HCT116 (cell line): ENCODE measurements at regions of chr12 and their contacts with region 1.

Region 1: GRCh38 chr12:96985480-96986362 is 78.7 kb downstream of the NEDD1 start:
- DNase-seq: peak; percentile 6
- ATAC-seq: peak; percentile 96
- H3K4me3 ChIP-seq: no peak overlapping the region
- H3K27ac ChIP-seq: no peak overlapping the region
- H3K4me1 ChIP-seq: peaks cover 0 to 3% of the 10 kb centered on the region in 2 experiments; a peak in 1 of 4 replicates
- H3K27me3 ChIP-seq: peaks cover 24% of the 10 kb centered on the region; the same call in 1 of the 2 replicates
- CTCF ChIP-seq: peak; percentile 66 to 90 (median 84)
- POLR2A ChIP-seq: no peak
- RAD21 ChIP-seq: peak; percentile 64

Region 2: DNA sequence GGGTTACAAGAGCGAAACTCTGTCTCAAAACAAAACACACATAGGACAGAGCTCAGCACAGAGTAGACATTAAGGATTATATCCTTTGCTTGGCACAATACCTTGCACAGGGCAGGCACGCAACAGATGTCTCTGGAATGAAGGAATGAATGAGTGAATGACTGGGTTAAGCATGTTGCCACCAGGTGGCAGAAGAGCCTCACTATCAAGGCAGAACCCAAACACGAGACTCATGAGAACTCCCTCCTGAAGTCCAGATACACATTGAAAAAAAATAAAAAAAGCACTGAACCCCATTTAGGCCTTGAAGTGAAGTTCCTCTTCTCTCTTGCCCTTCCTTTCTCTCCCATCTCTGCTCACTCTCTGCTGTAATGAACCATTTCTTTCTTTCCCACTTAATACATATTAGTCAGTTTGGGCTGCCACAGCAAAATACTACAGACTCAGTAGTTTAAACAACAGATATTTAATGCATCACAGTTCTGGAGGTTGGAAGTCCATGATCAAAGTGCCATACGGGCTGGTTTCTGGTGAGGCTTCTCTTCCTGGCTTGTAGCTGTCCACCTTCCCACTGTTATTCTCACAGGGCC is 923.8 kb before region 1 on chr12:
- CTCF ChIA-PET with region 1: no interaction called
- POLR2A ChIA-PET with region 1: no interaction called
- RAD21 ChIA-PET with region 1: no interaction called
- intact Hi-C with region 1: loop called (anchors 5 kb)
- DNase-seq: peak; percentile 81
- ATAC-seq: peak; percentile 96
- H3K4me3 ChIP-seq: no peak overlapping the region
- H3K27ac ChIP-seq: no peak overlapping the region
- H3K4me1 ChIP-seq: no peaks in the 10 kb centered on the region
- H3K27me3 ChIP-seq: no peaks in the 10 kb centered on the region
- CTCF ChIP-seq: peak; percentile 76 to 87 (median 84)
- POLR2A ChIP-seq: no peak
- RAD21 ChIP-seq: peak; percentile 98

Region 3: DNA sequence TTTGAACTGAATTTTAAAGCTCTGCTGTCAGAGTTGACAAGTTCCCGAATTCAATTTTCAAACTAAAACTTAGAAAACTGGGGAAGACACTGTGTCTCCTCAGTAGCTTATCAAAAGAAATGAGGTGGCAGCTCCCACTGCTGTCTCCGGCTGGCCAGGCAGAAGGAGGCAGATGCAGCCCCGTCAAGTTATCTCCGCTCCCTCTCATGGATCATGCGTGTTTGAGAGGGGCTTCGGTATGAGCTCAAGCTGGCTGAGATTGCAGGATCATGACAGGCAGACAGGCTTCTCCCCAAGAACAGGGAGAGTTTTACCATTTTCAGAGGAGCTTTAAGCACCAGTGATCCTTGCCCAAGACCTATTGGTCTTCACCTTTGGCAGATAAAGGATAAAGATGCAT is 10.1 kb after region 1 on chr12:
- CTCF ChIA-PET with region 1: interaction called, 11 read pairs
- POLR2A ChIA-PET with region 1: no interaction called
- RAD21 ChIA-PET with region 1: no interaction called
- intact Hi-C with region 1: no loop called
- DNase-seq: no peak
- ATAC-seq: no peak
- H3K4me3 ChIP-seq: no peak overlapping the region
- H3K27ac ChIP-seq: no peak overlapping the region
- H3K4me1 ChIP-seq: no peaks in the 10 kb centered on the region
- H3K27me3 ChIP-seq: peaks cover 93% of the 10 kb centered on the region
- CTCF ChIP-seq: no peak
- POLR2A ChIP-seq: no peak
- RAD21 ChIP-seq: no peak

Region 4: GRCh38 chr12:97006585-97006984 is 20.9 kb after region 1 on chr12:
- CTCF ChIA-PET with region 1: no interaction called
- POLR2A ChIA-PET with region 1: no interaction called
- RAD21 ChIA-PET with region 1: no interaction called
- intact Hi-C with region 1: no loop called
- DNase-seq: no peak
- ATAC-seq: no peak
- H3K4me3 ChIP-seq: no peak overlapping the region
- H3K27ac ChIP-seq: no peak overlapping the region
- H3K4me1 ChIP-seq: no peaks in the 10 kb centered on the region
- H3K27me3 ChIP-seq: peaks cover 53% of the 10 kb centered on the region
- CTCF ChIP-seq: no peak
- POLR2A ChIP-seq: no peak
- RAD21 ChIP-seq: no peak

Region 5: GRCh38 chr12:97308576-97309198 is 323.0 kb after region 1 on chr12:
- CTCF ChIA-PET with region 1: interaction called, 4 read pairs
- POLR2A ChIA-PET with region 1: no interaction called
- RAD21 ChIA-PET with region 1: no interaction called
- intact Hi-C with region 1: loop called (anchors 2 kb)
- DNase-seq: peak; percentile 46
- ATAC-seq: no peak
- H3K4me3 ChIP-seq: no peak overlapping the region
- H3K27ac ChIP-seq: no peak overlapping the region
- H3K4me1 ChIP-seq: no peaks in the 10 kb centered on the region
- H3K27me3 ChIP-seq: peaks cover 19% of the 10 kb centered on the region; the same call in 1 of the 2 replicates
- CTCF ChIP-seq: peak; percentile 46 to 72 (median 62); a peak in 5 of 6 replicates
- POLR2A ChIP-seq: no peak
- RAD21 ChIP-seq: peak; percentile 51

Region 6: DNA sequence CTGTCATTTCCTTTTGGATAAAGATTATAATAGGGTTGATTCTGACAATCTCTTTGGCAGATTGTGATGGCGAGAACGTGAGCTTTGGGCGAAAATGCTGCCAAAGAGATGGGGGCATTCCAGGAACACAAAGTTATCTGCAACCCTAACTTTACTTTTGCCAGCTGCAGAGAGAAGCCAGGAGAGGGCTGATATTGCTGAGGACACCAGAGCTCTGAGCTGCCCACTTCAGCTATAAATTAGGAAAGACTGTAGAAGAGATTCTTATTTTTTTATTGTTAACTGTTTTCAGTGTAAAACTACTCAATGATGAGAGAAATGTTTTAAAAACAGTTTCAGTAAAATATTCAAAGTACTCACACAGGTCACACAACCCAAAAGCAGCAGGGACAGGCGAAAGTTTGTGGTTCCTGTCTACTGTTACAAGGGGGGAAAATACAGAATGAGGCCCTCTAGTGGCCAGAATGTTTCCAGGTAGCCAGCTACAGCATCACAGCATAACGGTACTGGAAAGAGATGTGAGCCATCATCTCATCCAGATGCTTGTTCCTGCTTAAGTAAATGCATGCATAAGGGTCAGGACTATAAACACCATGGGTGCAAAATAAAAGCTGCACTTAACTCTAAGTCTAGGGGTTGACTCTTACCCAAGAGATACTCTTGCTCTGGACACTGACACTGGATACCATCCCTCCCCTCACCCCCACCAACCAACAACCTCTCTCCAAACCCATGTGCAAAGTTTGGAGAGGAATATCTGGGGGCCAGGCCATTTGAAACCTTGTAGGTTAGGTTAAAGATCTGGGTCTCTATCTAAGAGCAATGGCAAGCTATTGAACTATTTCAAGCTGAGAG is 975.3 kb after region 1 on chr12:
- CTCF ChIA-PET with region 1: interaction called, 3 read pairs
- POLR2A ChIA-PET with region 1: no interaction called
- RAD21 ChIA-PET with region 1: no interaction called
- intact Hi-C with region 1: loop called (anchors 2 kb)
- DNase-seq: peak; percentile 8
- ATAC-seq: peak; percentile 78
- H3K4me3 ChIP-seq: no peak overlapping the region
- H3K27ac ChIP-seq: no peak overlapping the region
- H3K4me1 ChIP-seq: no peaks in the 10 kb centered on the region
- H3K27me3 ChIP-seq: no peaks in the 10 kb centered on the region
- CTCF ChIP-seq: peak; percentile 29 to 82 (median 76); a peak in 5 of 6 replicates
- POLR2A ChIP-seq: no peak
- RAD21 ChIP-seq: peak; percentile 36

Region 7: GRCh38 chr12:98154850-98155249 is 1169.1 kb after region 1 on chr12:
- CTCF ChIA-PET with region 1: no interaction called
- POLR2A ChIA-PET with region 1: no interaction called
- RAD21 ChIA-PET with region 1: no interaction called
- intact Hi-C with region 1: loop called (anchors 5 kb)
- DNase-seq: peak; percentile 12
- ATAC-seq: peak; percentile 87
- H3K4me3 ChIP-seq: no peak overlapping the region
- H3K27ac ChIP-seq: no peak overlapping the region
- H3K4me1 ChIP-seq: no peaks in the 10 kb centered on the region
- H3K27me3 ChIP-seq: peaks cover 37% of the 10 kb centered on the region
- CTCF ChIP-seq: peak in 2 of 3 experiments; percentile 34 to 39; a peak in 4 of 6 replicates
- POLR2A ChIP-seq: no peak
- RAD21 ChIP-seq: peak; percentile 46; the same call in 1 of the 2 replicates

Region 8: DNA sequence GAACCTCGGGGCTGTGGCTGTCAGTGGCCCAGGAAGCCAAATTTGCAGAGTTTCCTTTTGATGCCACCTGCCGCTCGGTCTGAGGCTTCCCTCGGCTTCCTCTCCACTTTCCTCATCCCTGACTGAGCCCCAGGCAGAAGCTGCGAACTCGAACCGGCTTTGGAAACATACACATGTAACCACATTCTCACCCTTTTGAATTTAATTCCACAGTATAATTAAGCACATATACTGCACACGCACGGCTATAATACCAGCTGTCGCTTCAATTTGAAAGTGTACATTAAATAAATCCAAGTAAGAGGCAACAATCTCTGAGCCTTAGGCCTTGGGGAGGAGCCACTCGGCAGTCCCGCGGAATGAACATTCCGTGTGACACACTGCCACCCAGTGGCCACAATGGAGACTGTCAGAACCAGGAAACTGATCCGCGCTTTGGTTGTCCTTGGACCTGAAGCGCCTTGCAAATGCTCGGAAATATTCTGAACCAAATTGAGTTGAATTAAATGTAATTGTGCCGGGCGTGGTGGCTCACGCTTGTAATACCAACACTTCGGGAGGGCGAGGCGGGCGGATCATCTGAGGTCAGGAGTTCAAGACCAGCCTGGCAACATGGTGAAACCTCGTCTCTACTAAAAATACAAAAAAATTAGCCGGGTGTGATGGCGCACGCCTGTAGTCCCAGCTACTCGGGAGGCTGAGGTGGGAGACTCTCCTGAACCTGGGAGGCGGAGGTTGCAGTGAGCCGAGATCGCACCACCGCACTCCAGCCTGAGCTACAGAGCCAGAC is 1411.8 kb after region 1 on chr12:
- CTCF ChIA-PET with region 1: interaction called, 7 read pairs
- POLR2A ChIA-PET with region 1: no interaction called
- RAD21 ChIA-PET with region 1: no interaction called
- intact Hi-C with region 1: loop called (anchors 5 kb)
- DNase-seq: peak; percentile 80
- ATAC-seq: peak; percentile 72
- H3K4me3 ChIP-seq: peak overlapping the region; percentile 14 to 52
- H3K27ac ChIP-seq: peak overlapping the region; percentile 51
- H3K4me1 ChIP-seq: peaks cover 48 to 57% of the 10 kb centered on the region in 2 experiments
- H3K27me3 ChIP-seq: no peaks in the 10 kb centered on the region
- CTCF ChIP-seq: peak; percentile 81 to 91 (median 88)
- POLR2A ChIP-seq: no peak
- RAD21 ChIP-seq: peak; percentile 90